PC-9 (cell line): ENCODE measurements at regions of chr17 and their contacts with region 1.

Region 1: GRCh38 chr17:81294856-81295680 is at the start of gene SLC38A10:
- DNase-seq: peak; percentile 68 to 93
- H3K4me3 ChIP-seq: peak within 1 kb of the TSS; percentile 87
- H3K27ac ChIP-seq: peak within 1 kb of the TSS; percentile 56
- H3K4me1 ChIP-seq: peaks cover 12% of the 10 kb centered on the region; the same call in 1 of the 2 replicates
- H3K27me3 ChIP-seq: no peaks in the 10 kb centered on the region
- CTCF ChIP-seq: no peak
- total RNA-seq, gene SLC38A10: 127 and 130 TPM in 2 replicates

Region 2: GRCh38 chr17:80339118-80339517 is 956.0 kb before region 1 on chr17:
- CTCF ChIA-PET with region 1: no interaction called
- POLR2A ChIA-PET with region 1: no interaction called
- intact Hi-C with region 1: no loop called
- DNase-seq: no peak
- H3K4me3 ChIP-seq: no peak overlapping the region
- H3K27ac ChIP-seq: no peak overlapping the region
- H3K4me1 ChIP-seq: no peaks in the 10 kb centered on the region
- H3K27me3 ChIP-seq: no peaks in the 10 kb centered on the region
- CTCF ChIP-seq: no peak

Region 3: GRCh38 chr17:80523956-80524712 is 770.9 kb before region 1 on chr17:
- CTCF ChIA-PET with region 1: no interaction called
- POLR2A ChIA-PET with region 1: no interaction called
- intact Hi-C with region 1: no loop called
- DNase-seq: no peak
- H3K4me3 ChIP-seq: no peak overlapping the region
- H3K27ac ChIP-seq: no peak overlapping the region
- H3K4me1 ChIP-seq: no peaks in the 10 kb centered on the region
- H3K27me3 ChIP-seq: no peaks in the 10 kb centered on the region
- CTCF ChIP-seq: no peak

Region 4: GRCh38 chr17:81238817-81239600 is 56.1 kb before region 1 on chr17 and contains the starts of genes NDUFAF8 and TEPSIN:
- CTCF ChIA-PET with region 1: no interaction called
- POLR2A ChIA-PET with region 1: no interaction called
- intact Hi-C with region 1: no loop called
- DNase-seq: peak; percentile 97 to 99
- H3K4me3 ChIP-seq: peak within 1 kb of the TSS; percentile 75
- H3K27ac ChIP-seq: no peak within 1 kb of the TSS
- H3K4me1 ChIP-seq: peaks cover 6% of the 10 kb centered on the region; the same call in 1 of the 2 replicates
- H3K27me3 ChIP-seq: no peaks in the 10 kb centered on the region
- CTCF ChIP-seq: no peak
- total RNA-seq, gene NDUFAF8: 53.3 and 64.2 TPM in 2 replicates
- total RNA-seq, gene TEPSIN: 35.0 and 36.8 TPM in 2 replicates

Region 5: GRCh38 chr17:81309070-81309905 is 14.2 kb after region 1 on chr17:
- CTCF ChIA-PET with region 1: interaction called, 28 read pairs
- POLR2A ChIA-PET with region 1: interaction called, 9 read pairs
- intact Hi-C with region 1: no loop called
- DNase-seq: peak; percentile 76 to 92
- H3K4me3 ChIP-seq: peak overlapping the region; percentile 39; the same call in 1 of the 2 replicates
- H3K27ac ChIP-seq: peak overlapping the region; percentile 38; the same call in 1 of the 2 replicates
- H3K4me1 ChIP-seq: peaks cover 11% of the 10 kb centered on the region
- H3K27me3 ChIP-seq: no peaks in the 10 kb centered on the region
- CTCF ChIP-seq: peak; percentile 66

Region 6: GRCh38 chr17:81335388-81336148 is 40.5 kb after region 1 on chr17:
- CTCF ChIA-PET with region 1: no interaction called
- POLR2A ChIA-PET with region 1: interaction called, 14 read pairs
- intact Hi-C with region 1: no loop called
- DNase-seq: peak; percentile 75 to 95
- H3K4me3 ChIP-seq: no peak overlapping the region
- H3K27ac ChIP-seq: peak overlapping the region; percentile 48
- H3K4me1 ChIP-seq: peaks cover 56% of the 10 kb centered on the region
- H3K27me3 ChIP-seq: no peaks in the 10 kb centered on the region
- CTCF ChIP-seq: no peak

Region 7: GRCh38 chr17:81379523-81379942 is 84.5 kb after region 1 on chr17:
- CTCF ChIA-PET with region 1: interaction called, 3 read pairs
- POLR2A ChIA-PET with region 1: interaction called, 22 read pairs
- intact Hi-C with region 1: no loop called
- DNase-seq: peak; percentile 76 to 90
- H3K4me3 ChIP-seq: peak overlapping the region; percentile 33; the same call in 1 of the 2 replicates
- H3K27ac ChIP-seq: no peak overlapping the region
- H3K4me1 ChIP-seq: no peaks in the 10 kb centered on the region
- H3K27me3 ChIP-seq: no peaks in the 10 kb centered on the region
- CTCF ChIP-seq: no peak

Region 8: GRCh38 chr17:81419328-81419885 is 124.3 kb after region 1 on chr17:
- CTCF ChIA-PET with region 1: interaction called, 8 read pairs
- POLR2A ChIA-PET with region 1: interaction called, 24 read pairs
- intact Hi-C with region 1: no loop called
- DNase-seq: peak; percentile 48 to 94
- H3K4me3 ChIP-seq: peak overlapping the region; percentile 40; the same call in 1 of the 2 replicates
- H3K27ac ChIP-seq: peak overlapping the region; percentile 63
- H3K4me1 ChIP-seq: peaks cover 36% of the 10 kb centered on the region
- H3K27me3 ChIP-seq: no peaks in the 10 kb centered on the region
- CTCF ChIP-seq: no peak

Region 9: GRCh38 chr17:81436294-81436849 is 141.3 kb after region 1 on chr17:
- CTCF ChIA-PET with region 1: interaction called, 12 read pairs
- POLR2A ChIA-PET with region 1: interaction called, 12 read pairs
- intact Hi-C with region 1: no loop called
- DNase-seq: no peak
- H3K4me3 ChIP-seq: no peak overlapping the region
- H3K27ac ChIP-seq: no peak overlapping the region
- H3K4me1 ChIP-seq: no peaks in the 10 kb centered on the region
- H3K27me3 ChIP-seq: no peaks in the 10 kb centered on the region
- CTCF ChIP-seq: no peak